A549 (cell line): ENCODE measurements at regions of chr2 and their contacts with region 1.

Region 1: DNA sequence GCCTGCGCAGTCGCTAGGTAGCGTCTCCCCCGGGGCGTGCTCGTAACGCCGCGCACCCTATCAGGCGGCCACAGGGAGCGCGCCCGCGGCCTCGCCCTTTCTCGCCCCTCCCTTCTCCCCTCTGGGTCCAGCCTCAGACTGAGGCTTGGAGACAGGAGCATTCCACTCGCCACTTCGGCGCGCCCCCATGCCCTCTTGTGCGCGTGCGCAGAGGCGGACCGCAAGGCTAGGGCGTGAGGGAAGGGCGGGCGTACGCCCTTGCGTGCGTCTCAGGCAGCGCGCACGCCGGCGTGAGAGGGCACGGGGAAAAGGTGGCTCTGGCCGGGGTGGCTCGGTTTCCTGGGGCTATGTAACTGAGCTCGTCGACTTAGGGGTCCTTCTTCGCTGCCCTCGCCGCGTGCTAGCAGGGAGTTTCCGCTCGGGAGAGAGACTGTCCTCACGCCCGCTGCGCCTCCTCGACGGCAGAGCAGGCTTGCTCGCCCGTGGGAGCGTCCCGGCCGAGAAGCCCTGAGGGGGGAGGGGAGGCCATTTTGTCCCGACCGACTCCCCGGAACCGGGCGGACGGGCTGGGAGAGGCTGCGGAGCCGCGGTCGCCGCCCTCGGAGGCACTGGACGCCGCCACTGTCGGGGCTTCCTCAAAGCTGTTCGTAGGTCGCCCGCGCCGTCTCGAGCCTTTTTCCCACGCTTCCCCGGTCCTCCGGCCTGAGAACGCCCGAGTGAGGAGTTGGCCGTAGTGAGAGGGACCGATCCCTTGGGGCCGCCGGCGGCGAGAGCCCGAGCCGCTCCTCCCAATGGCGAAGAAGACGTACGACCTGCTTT is at the start of gene RAB10:
- DNase-seq: peak; percentile 97 to 100
- ATAC-seq: peak; percentile 88 to 89
- H3K4me3 ChIP-seq: peak within 1 kb of the TSS; percentile 92
- H3K27ac ChIP-seq: peak within 1 kb of the TSS; percentile 89 to 95
- H3K4me1 ChIP-seq: peaks cover 25% of the 10 kb centered on the region
- CTCF ChIP-seq: no peak
- EP300 ChIP-seq: no peak
- POLR2A ChIP-seq: peak; percentile 97
- RAD21 ChIP-seq: peak in 1 of 2 experiments; percentile 31; a peak in 2 of 5 replicates
- polyA plus RNA-seq, gene RAB10: 332 and 692 TPM in 2 replicates

Region 2: GRCh38 chr2:26001743-26002351 is 32.2 kb before region 1 on chr2:
- CTCF ChIA-PET with region 1: interaction called, 12 read pairs
- POLR2A ChIA-PET with region 1: interaction called, 17 read pairs
- DNase-seq: peak in 1 of 2 experiments; percentile 78
- ATAC-seq: peak; percentile 45 to 46
- H3K4me3 ChIP-seq: no peak overlapping the region
- H3K27ac ChIP-seq: peak overlapping the region; percentile 93 to 94
- H3K4me1 ChIP-seq: peaks cover 62% of the 10 kb centered on the region
- CTCF ChIP-seq: no peak
- EP300 ChIP-seq: peak; percentile 50 to 75; a peak in 2 of 5 replicates
- POLR2A ChIP-seq: no peak
- RAD21 ChIP-seq: 0 out of 5 replicates have a peak, but pooled peaks of 1 of the 2 experiments have one; percentile 26

Region 3: GRCh38 chr2:26008822-26009566 is 25.0 kb before region 1 on chr2:
- CTCF ChIA-PET with region 1: interaction called, 17 read pairs
- POLR2A ChIA-PET with region 1: interaction called, 26 read pairs
- DNase-seq: peak; percentile 68 to 91
- ATAC-seq: peak; percentile 46 to 55
- H3K4me3 ChIP-seq: no peak overlapping the region
- H3K27ac ChIP-seq: peak overlapping the region; percentile 90 to 93
- H3K4me1 ChIP-seq: peaks cover 52% of the 10 kb centered on the region
- CTCF ChIP-seq: no peak
- EP300 ChIP-seq: peak; percentile 50 to 74; a peak in 2 of 5 replicates
- POLR2A ChIP-seq: no peak
- RAD21 ChIP-seq: peak in 1 of 2 experiments; percentile 26; a peak in 2 of 5 replicates

Region 4: GRCh38 chr2:26018176-26018716 is 15.8 kb before region 1 on chr2:
- CTCF ChIA-PET with region 1: interaction called, 52 read pairs
- POLR2A ChIA-PET with region 1: interaction called, 38 read pairs
- DNase-seq: peak; percentile 95
- ATAC-seq: peak; percentile 98 to 99
- H3K4me3 ChIP-seq: no peak overlapping the region
- H3K27ac ChIP-seq: peak overlapping the region; percentile 73 to 93
- H3K4me1 ChIP-seq: peaks cover 73% of the 10 kb centered on the region
- CTCF ChIP-seq: no peak
- EP300 ChIP-seq: peak; percentile 41 to 44; a peak in 2 of 5 replicates
- POLR2A ChIP-seq: no peak
- RAD21 ChIP-seq: peak in 1 of 2 experiments; percentile 21; a peak in 2 of 5 replicates

Region 5: GRCh38 chr2:26043862-26044696 is 10.1 kb after region 1 on chr2:
- CTCF ChIA-PET with region 1: interaction called, 7 read pairs
- POLR2A ChIA-PET with region 1: interaction called, 10 read pairs
- DNase-seq: no peak
- ATAC-seq: peak; percentile 15 to 32; a peak in 5 of 6 replicates
- H3K4me3 ChIP-seq: peak overlapping the region; percentile 13; the same call in 1 of the 3 replicates
- H3K27ac ChIP-seq: peak overlapping the region; percentile 47 to 74; a peak in 5 of 6 replicates
- H3K4me1 ChIP-seq: peaks cover 71% of the 10 kb centered on the region
- CTCF ChIP-seq: no peak
- EP300 ChIP-seq: no peak
- POLR2A ChIP-seq: no peak
- RAD21 ChIP-seq: no peak

Region 6: GRCh38 chr2:26099933-26100332 is 65.9 kb after region 1 on chr2:
- CTCF ChIA-PET with region 1: no interaction called
- POLR2A ChIA-PET with region 1: interaction called, 11 read pairs
- DNase-seq: no peak
- ATAC-seq: no peak
- H3K4me3 ChIP-seq: no peak overlapping the region
- H3K27ac ChIP-seq: no peak overlapping the region
- H3K4me1 ChIP-seq: peaks cover 23% of the 10 kb centered on the region
- CTCF ChIP-seq: no peak
- EP300 ChIP-seq: no peak
- POLR2A ChIP-seq: no peak
- RAD21 ChIP-seq: no peak